Head of caudate nucleus (tissue), 42 donors: ENCODE measurements at regions of chr18 and their contacts with region 1.

Region 1: GRCh38 chr18:54224379-54225014 is at the start of gene MBD2:
- DNase-seq: peak; percentile 86 to 97 (median 94)

Region 2: DNA sequence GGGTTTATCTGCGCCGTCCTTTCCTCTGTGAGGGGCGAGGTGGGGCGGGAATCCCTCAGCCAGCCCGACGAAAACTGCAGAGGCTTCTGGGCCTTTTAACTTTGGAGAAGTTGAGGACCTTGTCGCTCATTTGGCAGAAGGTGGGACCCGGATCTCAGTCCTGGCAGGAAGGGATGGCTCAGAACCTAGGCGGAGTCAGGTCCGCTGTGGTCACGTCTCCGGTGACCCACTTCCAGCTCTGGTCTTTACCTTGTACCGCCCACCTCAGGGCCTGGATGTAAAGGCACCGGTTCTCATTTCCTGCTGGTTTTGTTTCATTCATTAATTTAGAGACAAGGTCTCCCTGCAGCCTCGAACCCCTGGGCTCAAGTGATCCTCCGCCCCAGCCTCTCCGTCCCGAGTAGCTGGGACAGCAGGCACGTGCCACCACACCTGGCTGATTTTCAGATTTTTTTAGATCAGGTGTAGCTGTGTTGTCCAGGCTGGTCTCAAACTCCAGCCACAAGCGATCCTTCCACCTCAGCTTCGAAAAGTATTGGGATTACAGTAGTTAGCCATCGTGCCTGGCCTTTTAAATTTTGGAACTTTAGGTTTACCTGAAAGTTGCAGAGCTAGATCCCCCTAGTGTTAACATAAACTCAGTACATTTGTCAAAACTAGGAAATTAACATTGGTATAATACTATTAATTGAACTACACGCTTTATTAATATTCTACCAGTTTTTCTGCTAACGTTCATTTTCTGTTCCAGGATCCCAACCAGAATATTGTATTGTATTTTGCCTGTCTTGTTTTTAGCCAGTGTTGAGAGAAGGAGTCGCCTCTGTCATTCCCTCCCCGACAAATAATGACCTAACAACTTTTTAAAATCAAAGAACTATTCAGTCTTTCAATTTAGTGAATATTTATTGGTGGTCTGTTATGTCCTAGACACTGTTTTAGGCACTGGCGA is 45.7 kb after region 1 on chr18:
- intact Hi-C with region 1: loop called (anchors 5 kb)
- DNase-seq: peak in 14 of 42 donors; percentile 7 to 51 (median 32)

Region 3: DNA sequence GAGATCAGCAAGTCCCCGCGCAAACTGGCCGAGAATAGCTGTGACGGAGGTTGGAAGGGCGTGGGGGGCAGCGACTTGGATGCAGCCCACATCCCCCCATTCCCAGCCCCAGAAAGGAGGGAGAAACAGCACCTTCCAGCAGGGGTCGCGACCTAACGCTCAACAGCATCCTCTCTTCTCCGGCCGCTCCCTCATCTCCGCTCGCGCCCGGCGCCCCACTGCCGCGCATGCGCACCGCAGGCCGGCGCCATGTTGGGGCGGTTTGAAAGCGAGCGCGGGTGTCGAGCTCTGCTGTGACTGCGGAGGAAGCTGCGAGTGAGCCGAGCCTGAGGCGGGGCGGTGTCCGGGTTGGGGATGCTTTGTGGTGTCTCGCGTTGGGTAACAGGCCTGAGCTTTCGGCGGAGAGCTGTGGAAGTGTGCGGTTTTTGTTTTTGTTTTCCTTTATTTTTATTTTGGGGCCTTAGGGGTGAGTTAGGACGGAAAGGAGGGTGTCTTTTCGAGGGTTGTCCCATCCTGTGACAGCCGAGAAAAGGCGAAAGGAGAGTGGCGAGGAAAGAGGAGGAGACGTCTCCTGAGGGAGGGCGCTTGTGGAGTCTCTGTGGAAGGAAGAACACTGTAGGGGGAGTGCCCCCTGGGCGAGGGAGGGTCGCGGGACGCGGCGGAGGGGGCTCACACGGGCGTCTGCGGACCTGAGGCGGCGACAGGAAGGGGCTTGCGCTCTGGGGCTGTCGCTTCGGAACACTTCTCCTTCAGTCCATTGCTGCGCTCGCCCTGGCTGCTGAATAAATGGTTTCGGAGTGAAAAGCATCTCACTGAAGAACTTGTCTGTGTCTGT is 133.4 kb after region 1 on chr18 and contains the starts of genes C18orf54 and STARD6:
- intact Hi-C with region 1: loop called (anchors 10 kb)
- DNase-seq: peak; percentile 74 to 95 (median 89)